ENCODE measurements at regions of chr15 and their contacts with region 1.

Region 1: GRCh38 chr15:38554354-38554753 is 10.3 kb downstream of the RASGRP1 start:
- DNase-seq: no peak
- ATAC-seq: no peak
- H3K4me3 ChIP-seq: no peak overlapping the region
- H3K27ac ChIP-seq: no peak overlapping the region
- H3K4me1 ChIP-seq: peaks cover 0 to 44% (median 0%) of the 10 kb centered on the region in 9 donors
- H3K27me3 ChIP-seq: peaks cover 0 to 29% (median 0%) of the 10 kb centered on the region in 7 donors
- CTCF ChIP-seq: no peak

Region 2: GRCh38 chr15:38461066-38461833 is 93.1 kb before region 1 on chr15:
- intact Hi-C with region 1: loop called in 1 of 10 experiments (anchors 10 kb)
- DNase-seq: no peak
- ATAC-seq: no peak
- H3K4me3 ChIP-seq: no peak overlapping the region
- H3K27ac ChIP-seq: no peak overlapping the region
- H3K4me1 ChIP-seq: peaks cover 0 to 17% (median 0%) of the 10 kb centered on the region in 9 donors
- H3K27me3 ChIP-seq: no peaks in the 10 kb centered on the region
- CTCF ChIP-seq: no peak

Region 3: GRCh38 chr15:38647683-38648082 is 93.3 kb after region 1 on chr15:
- intact Hi-C with region 1: loop called in 2 of 10 experiments (anchors 10 kb)
- DNase-seq: no peak
- ATAC-seq: no peak
- H3K4me3 ChIP-seq: no peak overlapping the region
- H3K27ac ChIP-seq: no peak overlapping the region
- H3K4me1 ChIP-seq: peaks cover 0 to 7% (median 0%) of the 10 kb centered on the region in 9 donors
- H3K27me3 ChIP-seq: peaks cover 0 to 10% (median 0%) of the 10 kb centered on the region in 7 donors
- CTCF ChIP-seq: peak in 7 of 9 donors; percentile 18 to 45 (median 34)

Region 4: GRCh38 chr15:38683382-38684242 is 129.3 kb after region 1 on chr15:
- intact Hi-C with region 1: loop called in 1 of 10 experiments (anchors 5 kb)
- DNase-seq: peak; percentile 18 to 42
- ATAC-seq: peak in 7 of 8 donors; percentile 56 to 81 (median 69)
- H3K4me3 ChIP-seq: no peak overlapping the region
- H3K27ac ChIP-seq: peak overlapping the region in 1 of 10 donors; percentile 66
- H3K4me1 ChIP-seq: peaks cover 0 to 28% (median 0%) of the 10 kb centered on the region in 9 donors
- H3K27me3 ChIP-seq: peaks cover 0 to 7% (median 0%) of the 10 kb centered on the region in 7 donors
- CTCF ChIP-seq: peak; percentile 52 to 81 (median 74)

Measured in heart right ventricle (tissue), 16 donors.